Natural killer cell (primary cell): ENCODE measurements at regions of chr20 and their contacts with region 1.

Region 1: DNA sequence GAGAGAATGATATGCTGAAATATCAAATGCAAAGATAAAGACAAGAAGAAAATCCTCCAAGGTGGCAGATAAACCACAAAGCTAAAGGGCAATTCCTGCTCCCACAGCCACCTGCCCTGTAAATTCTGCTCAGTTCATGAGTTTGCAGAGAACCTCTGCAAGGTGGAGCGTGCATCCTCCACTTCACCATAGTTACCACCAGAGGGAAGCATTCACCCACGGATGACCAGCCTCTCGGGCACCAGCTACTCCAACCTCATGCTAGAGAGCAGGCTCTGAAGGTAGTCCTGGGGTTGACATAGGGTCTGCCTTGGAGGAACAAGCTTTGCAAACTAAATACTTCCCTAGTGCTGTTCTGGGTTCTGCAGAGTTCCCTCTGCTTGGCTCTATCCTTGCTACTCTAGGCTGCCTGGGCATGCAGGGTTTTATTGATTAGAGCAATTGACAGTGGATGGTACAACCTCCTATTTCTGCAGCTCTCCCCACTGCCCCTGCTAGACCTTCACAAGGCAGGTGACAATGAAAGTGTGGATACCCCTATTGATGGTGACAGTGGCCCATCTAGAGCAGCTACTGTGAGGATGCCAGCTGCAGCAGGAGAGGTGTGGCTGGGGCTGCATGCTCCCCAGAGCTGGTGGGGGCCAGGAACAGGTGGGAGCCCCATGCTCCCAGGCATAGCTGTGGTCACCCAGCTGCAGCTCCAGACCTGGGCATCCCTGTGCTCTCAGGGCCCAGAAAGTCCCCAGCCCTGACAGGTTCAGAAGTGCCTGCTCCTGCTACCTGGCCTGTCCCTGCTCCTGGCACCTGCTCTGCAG is 51.1 kb downstream of the GGTLC1 start:
- DNase-seq: peak; percentile 65 to 86
- ATAC-seq: peak; percentile 92 to 100 (median 100)
- H3K4me3 ChIP-seq: no peak overlapping the region
- H3K4me3 Mint-ChIP-seq: no peak overlapping the region
- H3K27ac ChIP-seq: no peak overlapping the region
- H3K27ac Mint-ChIP-seq: no peak overlapping the region
- H3K4me1 ChIP-seq: peaks cover 4% of the 10 kb centered on the region
- H3K4me1 Mint-ChIP-seq: peaks cover 2% of the 10 kb centered on the region in 2 donors
- H3K27me3 ChIP-seq: no peaks in the 10 kb centered on the region
- H3K27me3 Mint-ChIP-seq: peaks cover 31 to 39% of the 10 kb centered on the region in 2 donors
- CTCF ChIP-seq: peak; percentile 93

Region 2: GRCh38 chr20:23773127-23773526 is 164.4 kb before region 1 on chr20:
- intact Hi-C with region 1: no loop called
- DNase-seq: no peak
- ATAC-seq: no peak
- H3K4me3 ChIP-seq: no peak overlapping the region
- H3K4me3 Mint-ChIP-seq: no peak overlapping the region
- H3K27ac ChIP-seq: no peak overlapping the region
- H3K27ac Mint-ChIP-seq: no peak overlapping the region
- H3K4me1 ChIP-seq: no peaks in the 10 kb centered on the region
- H3K4me1 Mint-ChIP-seq: no peaks in the 10 kb centered on the region
- H3K27me3 ChIP-seq: no peaks in the 10 kb centered on the region
- H3K27me3 Mint-ChIP-seq: peaks cover 13 to 18% of the 10 kb centered on the region in 2 donors
- CTCF ChIP-seq: no peak

Region 3: GRCh38 chr20:24027229-24027628 is 89.7 kb after region 1 on chr20:
- intact Hi-C with region 1: no loop called
- DNase-seq: peak; percentile 74 to 88
- ATAC-seq: peak; percentile 97 to 99 (median 98)
- H3K4me3 ChIP-seq: no peak overlapping the region
- H3K4me3 Mint-ChIP-seq: peak overlapping the region; percentile 70
- H3K27ac ChIP-seq: peak overlapping the region; percentile 100
- H3K27ac Mint-ChIP-seq: peak overlapping the region in 1 of 2 donors; percentile 98
- H3K4me1 ChIP-seq: peaks cover 30% of the 10 kb centered on the region
- H3K4me1 Mint-ChIP-seq: peaks cover 55 to 63% of the 10 kb centered on the region in 2 donors
- H3K27me3 ChIP-seq: no peaks in the 10 kb centered on the region
- H3K27me3 Mint-ChIP-seq: no peaks in the 10 kb centered on the region
- CTCF ChIP-seq: no peak

Region 4: DNA sequence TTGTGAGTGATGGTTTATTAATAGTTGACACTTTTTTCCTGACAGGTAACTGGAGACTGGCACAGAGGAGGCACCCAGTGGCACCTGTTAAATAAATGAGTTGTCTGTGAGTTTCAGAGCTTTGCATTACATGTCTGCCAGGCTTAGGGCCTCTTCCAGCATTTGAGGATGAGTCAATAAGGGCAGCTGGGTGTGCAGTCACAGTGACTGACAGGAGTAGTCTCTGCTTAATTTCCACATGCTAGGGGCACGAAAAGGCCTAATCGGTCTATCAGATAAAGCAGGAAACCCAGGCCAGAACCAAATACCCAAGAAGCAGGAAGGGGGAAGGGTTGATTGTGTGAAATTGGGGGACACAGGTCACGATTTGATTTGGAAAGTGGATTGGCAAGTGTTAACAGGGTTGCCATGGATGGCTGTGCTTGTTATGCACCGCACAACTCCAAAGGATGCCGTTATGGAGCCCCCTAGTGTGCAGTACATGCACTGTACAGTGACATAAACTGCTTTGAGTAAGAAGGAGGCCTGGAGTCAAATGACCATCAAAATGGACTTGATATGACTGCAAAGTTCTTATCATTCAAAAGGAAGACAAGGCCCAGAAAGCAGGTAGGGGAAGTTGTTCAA is 163.0 kb after region 1 on chr20:
- intact Hi-C with region 1: loop called (anchors 1 kb)
- DNase-seq: peak; percentile 51 to 80
- ATAC-seq: peak; percentile 91 to 97 (median 95)
- H3K4me3 ChIP-seq: no peak overlapping the region
- H3K4me3 Mint-ChIP-seq: no peak overlapping the region
- H3K27ac ChIP-seq: no peak overlapping the region
- H3K27ac Mint-ChIP-seq: peak overlapping the region in 1 of 2 donors; percentile 76
- H3K4me1 ChIP-seq: peaks cover 10% of the 10 kb centered on the region
- H3K4me1 Mint-ChIP-seq: peaks cover 23 to 27% of the 10 kb centered on the region in 2 donors
- H3K27me3 ChIP-seq: no peaks in the 10 kb centered on the region
- H3K27me3 Mint-ChIP-seq: peaks cover 8% of the 10 kb centered on the region in 2 donors
- CTCF ChIP-seq: peak; percentile 70

Region 5: DNA sequence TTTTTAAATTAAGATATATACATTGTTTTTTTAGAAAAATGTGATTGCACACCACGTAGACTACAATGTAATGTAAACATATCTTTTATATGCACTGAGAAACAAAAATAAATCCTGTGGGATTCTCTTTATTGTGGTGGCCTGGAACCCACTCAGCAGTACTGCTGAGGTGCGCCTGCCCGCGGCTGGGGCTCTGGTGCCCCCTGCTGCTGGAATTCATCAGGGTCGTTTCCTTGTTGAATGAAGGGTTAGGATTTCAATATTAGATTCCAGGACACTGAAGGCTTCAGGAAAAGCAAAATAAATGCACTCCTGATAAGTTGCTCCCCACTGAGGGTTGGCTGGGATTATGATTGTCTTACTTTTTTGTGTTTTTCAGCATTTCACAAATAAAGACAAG is 226.8 kb after region 1 on chr20:
- intact Hi-C with region 1: loop called (anchors 1 kb)
- DNase-seq: peak; percentile 44 to 58
- ATAC-seq: peak in 2 of 3 donors; percentile 58 to 72
- H3K4me3 ChIP-seq: no peak overlapping the region
- H3K4me3 Mint-ChIP-seq: no peak overlapping the region
- H3K27ac ChIP-seq: no peak overlapping the region
- H3K27ac Mint-ChIP-seq: no peak overlapping the region
- H3K4me1 ChIP-seq: peaks cover 9% of the 10 kb centered on the region
- H3K4me1 Mint-ChIP-seq: peaks cover 11 to 26% of the 10 kb centered on the region in 2 donors
- H3K27me3 ChIP-seq: no peaks in the 10 kb centered on the region
- H3K27me3 Mint-ChIP-seq: peaks cover 3 to 7% of the 10 kb centered on the region in 2 donors
- CTCF ChIP-seq: peak; percentile 82

Region 6: GRCh38 chr20:24917797-24918578 is 980.5 kb after region 1 on chr20:
- intact Hi-C with region 1: loop called (anchors 1 kb)
- DNase-seq: peak; percentile 57 to 80
- ATAC-seq: peak; percentile 81 to 92 (median 82)
- H3K4me3 ChIP-seq: no peak overlapping the region
- H3K4me3 Mint-ChIP-seq: peak overlapping the region; percentile 59
- H3K27ac ChIP-seq: no peak overlapping the region
- H3K27ac Mint-ChIP-seq: peak overlapping the region in 1 of 2 donors; percentile 54
- H3K4me1 ChIP-seq: peaks cover 10% of the 10 kb centered on the region
- H3K4me1 Mint-ChIP-seq: peaks cover 11 to 15% of the 10 kb centered on the region in 2 donors
- H3K27me3 ChIP-seq: no peaks in the 10 kb centered on the region
- H3K27me3 Mint-ChIP-seq: peaks cover 0 to 6% of the 10 kb centered on the region in 2 donors
- CTCF ChIP-seq: peak; percentile 85

Region 7: GRCh38 chr20:25065625-25066338 is 1128.3 kb after region 1 on chr20:
- intact Hi-C with region 1: loop called (anchors 5 kb)
- DNase-seq: peak; percentile 58 to 86
- ATAC-seq: peak; percentile 68 to 86 (median 83)
- H3K4me3 ChIP-seq: no peak overlapping the region
- H3K4me3 Mint-ChIP-seq: no peak overlapping the region
- H3K27ac ChIP-seq: no peak overlapping the region
- H3K27ac Mint-ChIP-seq: no peak overlapping the region
- H3K4me1 ChIP-seq: peaks cover 7% of the 10 kb centered on the region
- H3K4me1 Mint-ChIP-seq: peaks cover 7 to 11% of the 10 kb centered on the region in 2 donors
- H3K27me3 ChIP-seq: no peaks in the 10 kb centered on the region
- H3K27me3 Mint-ChIP-seq: peaks cover 14 to 21% of the 10 kb centered on the region in 2 donors
- CTCF ChIP-seq: peak; percentile 84